OCI-LY7 (cell line): ENCODE measurements at regions of chr4 and their contacts with region 1.

Region 1: GRCh38 chr4:74473155-74473811 is 28.3 kb downstream of the AREG start:
- DNase-seq: no peak
- H3K4me3 ChIP-seq: no peak overlapping the region
- H3K27ac ChIP-seq: no peak overlapping the region
- H3K4me1 ChIP-seq: no peaks in the 10 kb centered on the region
- CTCF ChIP-seq: no peak

Region 2: DNA sequence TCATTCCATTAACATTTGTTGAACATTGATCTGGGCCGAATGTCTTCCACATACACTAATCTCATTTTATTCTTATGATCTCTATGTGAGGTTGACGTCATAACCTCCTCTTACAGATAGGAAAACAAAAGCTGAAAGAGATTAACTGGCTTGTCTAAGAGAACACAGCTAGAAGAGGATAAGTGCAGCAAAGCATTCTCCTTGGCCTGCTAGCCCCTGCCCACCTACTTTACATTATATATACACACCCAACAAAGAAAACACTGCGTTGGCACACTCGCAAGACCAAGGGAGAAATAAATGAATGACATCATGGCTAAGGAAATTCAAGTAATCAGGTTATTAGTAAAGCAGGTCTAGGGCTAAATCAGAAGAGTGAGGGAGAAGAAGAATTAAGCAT is 598.0 kb after region 1 on chr4:
- CTCF ChIA-PET with region 1: no interaction called
- POLR2A ChIA-PET with region 1: interaction called, 11 read pairs
- intact Hi-C with region 1: no loop called
- DNase-seq: no peak
- H3K4me3 ChIP-seq: no peak overlapping the region
- H3K27ac ChIP-seq: no peak overlapping the region
- H3K4me1 ChIP-seq: no peaks in the 10 kb centered on the region
- CTCF ChIP-seq: no peak